ENCODE measurements at regions of chr21 and their contacts with region 1.

Region 1: GRCh38 chr21:15039607-15040299 is 25.0 kb downstream of the NRIP1 start:
- DNase-seq: no peak
- CTCF ChIP-seq: no peak

Region 2: DNA sequence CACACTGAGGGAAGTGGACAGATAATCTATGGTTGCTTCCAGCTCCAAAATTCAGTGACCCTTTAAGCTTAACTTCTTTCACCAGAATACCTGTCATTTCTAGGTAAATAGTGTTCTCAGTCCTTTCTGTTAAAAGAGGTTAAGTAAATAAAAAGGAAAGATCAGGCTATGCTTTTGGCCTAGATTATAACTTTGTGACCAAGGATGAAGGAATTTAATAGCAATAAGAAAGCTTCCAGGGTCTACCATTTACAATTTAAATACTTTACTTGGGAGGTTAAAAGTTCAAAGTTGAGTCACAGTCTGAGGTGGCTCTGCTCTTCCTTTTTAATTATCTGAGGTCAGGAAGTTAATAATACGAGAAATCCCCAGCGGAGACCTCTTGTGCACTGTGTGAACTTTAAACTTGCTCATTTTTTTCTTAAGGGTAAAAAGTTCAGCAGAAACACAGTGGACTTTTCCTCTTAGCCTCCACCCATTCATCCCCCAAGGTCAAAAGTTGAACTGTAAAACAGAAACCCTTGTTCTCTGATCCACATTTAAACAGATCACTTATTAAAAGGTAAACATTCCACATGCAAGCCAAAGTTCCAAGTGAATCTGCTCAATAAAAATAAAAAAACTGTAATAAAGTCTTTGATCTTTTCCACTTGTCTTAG is 162.1 kb before region 1 on chr21:
- in situ Hi-C with region 1: loop called (anchors 10 kb)
- DNase-seq: peak; percentile 32
- CTCF ChIP-seq: no peak

Region 3: DNA sequence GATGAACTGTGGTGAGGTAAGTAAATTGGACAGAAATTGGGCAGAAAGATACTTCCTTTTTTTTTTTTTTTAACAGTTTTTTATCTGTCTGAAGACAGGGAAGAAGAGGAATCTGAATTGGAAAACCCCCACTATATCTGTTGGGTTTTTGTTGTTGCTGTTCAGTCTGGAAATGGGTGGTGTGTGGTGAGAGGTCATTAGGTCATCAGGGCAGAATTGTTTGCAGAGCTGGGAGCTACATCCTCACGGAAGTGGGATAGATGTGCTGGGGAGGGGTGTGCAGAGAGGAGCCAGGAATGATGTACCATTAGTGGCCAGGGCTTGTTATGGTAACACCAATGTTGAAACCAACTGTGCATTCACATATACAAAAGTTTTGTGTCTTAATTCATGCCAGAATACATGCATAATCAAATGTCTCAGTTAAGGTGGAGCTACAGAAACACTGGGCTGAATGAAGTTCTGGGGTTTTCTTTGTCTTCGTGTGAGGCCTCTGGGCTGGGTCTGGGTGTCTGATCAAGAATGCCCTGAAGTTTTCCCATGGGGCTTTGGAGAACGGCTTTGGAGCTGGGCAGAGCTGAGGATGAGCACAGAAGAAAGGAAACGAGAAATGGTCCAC is 702.4 kb after region 1 on chr21:
- in situ Hi-C with region 1: no loop called
- DNase-seq: no peak
- CTCF ChIP-seq: no peak